ENCODE measurements at regions of chr4 and their contacts with region 1.

Region 1: DNA sequence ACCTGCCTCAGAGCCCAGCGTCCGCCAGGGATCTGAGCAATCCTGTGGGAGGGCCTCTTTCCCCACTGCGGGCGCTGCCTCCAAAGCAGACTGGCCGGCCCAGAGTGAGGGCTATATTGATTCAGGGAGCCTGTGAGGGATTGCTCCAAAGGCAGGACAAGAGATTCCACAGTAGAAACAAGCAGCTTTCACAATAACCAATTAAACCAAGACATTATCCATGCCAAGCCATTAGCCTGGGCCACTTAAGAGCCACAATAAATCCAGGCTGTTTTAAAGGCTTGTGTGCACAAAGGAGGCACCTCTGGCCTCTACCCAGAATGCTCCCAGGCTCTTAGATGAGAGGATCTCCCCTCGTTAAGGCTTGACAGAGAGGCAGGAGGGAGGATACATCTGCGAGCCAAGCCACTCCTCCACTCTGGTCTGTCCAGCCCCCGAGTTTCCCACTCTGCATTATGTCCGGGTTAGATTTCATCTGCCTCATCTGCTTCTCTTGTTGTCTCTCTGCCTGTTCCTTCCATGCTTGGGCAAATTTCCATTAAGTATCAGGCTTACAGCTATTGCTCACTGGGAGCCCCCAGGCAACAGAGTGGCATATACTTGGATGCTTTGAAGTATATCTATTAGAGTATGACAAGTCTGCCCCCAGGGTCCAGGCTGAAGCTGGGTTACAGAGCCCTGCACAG is 357.9 kb downstream of the UNC5C start:
- DNase-seq: no peak
- ATAC-seq: no peak
- H3K4me3 ChIP-seq: no peak overlapping the region
- H3K27ac ChIP-seq: no peak overlapping the region
- H3K4me1 ChIP-seq: no peaks in the 10 kb centered on the region
- H3K27me3 ChIP-seq: peaks cover 2% of the 10 kb centered on the region; the same call in 1 of the 2 replicates
- CTCF ChIP-seq: no peak
- POLR2A ChIP-seq: no peak
- RAD21 ChIP-seq: no peak

Region 2: GRCh38 chr4:94649381-94650133 is 541.3 kb before region 1 on chr4:
- CTCF ChIA-PET with region 1: no interaction called
- POLR2A ChIA-PET with region 1: no interaction called
- dilution Hi-C with region 1: no loop called
- in situ Hi-C with region 1: no loop called
- intact Hi-C with region 1: no loop called
- DNase-seq: peak; percentile 32
- ATAC-seq: peak; percentile 27; the same call in 1 of the 2 replicates
- H3K4me3 ChIP-seq: no peak overlapping the region
- H3K27ac ChIP-seq: no peak overlapping the region
- H3K4me1 ChIP-seq: peaks cover 4% of the 10 kb centered on the region; the same call in 1 of the 2 replicates
- H3K27me3 ChIP-seq: no peaks in the 10 kb centered on the region
- CTCF ChIP-seq: no peak
- POLR2A ChIP-seq: no peak
- RAD21 ChIP-seq: no peak

Region 3: DNA sequence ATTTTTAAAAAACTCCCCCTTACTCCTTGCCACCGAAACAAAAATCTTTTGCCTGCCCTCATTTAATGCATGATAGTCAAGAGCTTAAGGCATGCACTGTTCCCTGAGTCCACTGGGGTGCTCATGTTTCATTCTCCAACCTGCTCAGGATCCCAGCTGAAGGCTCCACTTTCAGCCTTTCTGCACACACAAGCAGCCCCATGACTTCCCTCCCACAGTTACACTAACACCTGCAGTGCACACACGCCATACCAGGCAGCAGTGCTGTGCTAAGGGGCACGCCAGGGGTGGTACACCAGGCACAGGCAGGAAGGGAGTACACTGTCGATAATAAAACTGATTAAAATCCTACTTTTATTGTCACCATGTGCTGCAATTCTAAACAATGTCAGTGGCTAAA is 48.0 kb before region 1 on chr4:
- CTCF ChIA-PET with region 1: no interaction called
- POLR2A ChIA-PET with region 1: interaction called, 12 read pairs
- dilution Hi-C with region 1: no loop called
- in situ Hi-C with region 1: no loop called
- intact Hi-C with region 1: no loop called
- DNase-seq: no peak
- ATAC-seq: no peak
- H3K4me3 ChIP-seq: no peak overlapping the region
- H3K27ac ChIP-seq: no peak overlapping the region
- H3K4me1 ChIP-seq: no peaks in the 10 kb centered on the region
- H3K27me3 ChIP-seq: 0 out of 2 replicates have a peak, but pooled peaks cover 3% of the 10 kb centered on the region
- CTCF ChIP-seq: no peak
- POLR2A ChIP-seq: no peak
- RAD21 ChIP-seq: no peak

Measured in IMR-90 (cell line).